ENCODE measurements at regions of chr2 and their contacts with region 1.

Region 1: DNA sequence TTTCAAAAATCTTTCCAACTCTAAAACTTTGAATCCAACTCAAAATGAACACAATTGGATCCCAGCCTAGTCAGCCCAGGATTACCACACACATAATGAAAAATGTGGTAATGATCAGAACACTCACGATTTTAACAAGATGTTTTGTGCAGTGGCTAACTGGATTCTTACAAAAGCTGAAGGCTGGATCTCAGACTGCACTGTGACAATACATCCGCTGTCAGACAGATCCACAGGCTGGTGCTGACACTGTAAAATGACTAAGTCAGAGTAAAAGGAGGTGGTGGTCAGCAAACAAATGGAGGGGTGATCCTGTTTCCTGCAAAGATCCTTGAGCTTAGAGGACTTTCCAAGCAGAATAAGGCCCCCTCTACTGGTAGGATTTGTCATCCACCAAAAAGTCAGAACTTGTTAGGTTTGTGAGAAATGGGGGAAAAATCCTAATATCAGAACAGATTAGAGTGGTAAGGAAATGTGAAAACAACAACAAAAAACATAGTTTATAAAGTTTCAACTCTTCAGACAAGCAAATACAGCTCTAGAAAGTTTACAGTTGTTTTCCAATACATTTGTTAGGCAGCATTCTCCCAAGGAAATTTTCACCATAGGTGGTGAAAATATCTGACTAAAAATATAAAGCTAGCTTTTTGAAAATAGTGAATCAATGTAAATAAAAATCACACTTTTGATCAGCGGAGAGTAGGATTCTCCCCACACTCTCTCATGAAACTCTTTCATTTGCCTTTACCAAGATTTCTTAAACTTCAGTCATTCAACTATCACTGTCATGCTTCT is 211.9 kb downstream of the AGPS start:
- DNase-seq: peak; percentile 71
- H3K4me3 ChIP-seq: no peak overlapping the region
- H3K27ac ChIP-seq: no peak overlapping the region
- H3K4me1 ChIP-seq: no peaks in the 10 kb centered on the region
- H3K27me3 ChIP-seq: no peaks in the 10 kb centered on the region
- CTCF ChIP-seq: peak; percentile 56 to 70
- POLR2A ChIP-seq: no peak

Region 2: DNA sequence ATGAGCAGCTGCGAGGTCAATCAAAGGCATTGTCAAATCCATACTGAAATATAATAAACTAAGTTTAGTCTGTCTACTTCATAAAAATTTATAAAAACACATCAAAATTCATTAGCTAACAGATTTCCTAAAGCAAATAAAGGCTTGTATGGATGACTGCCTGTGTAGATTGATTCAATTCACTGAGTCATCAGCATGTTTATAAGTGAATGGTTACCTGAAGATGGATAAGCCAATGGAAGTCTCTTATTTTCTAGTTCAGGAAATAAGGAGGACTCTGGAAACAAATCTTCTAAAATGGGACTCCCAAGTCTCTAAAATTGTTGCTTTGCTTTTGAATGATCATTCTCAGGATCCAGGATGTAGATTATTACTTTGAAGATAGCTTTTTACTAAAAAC is 448.8 kb before region 1 on chr2:
- CTCF ChIA-PET with region 1: no interaction called
- POLR2A ChIA-PET with region 1: no interaction called
- dilution Hi-C with region 1: no loop called
- intact Hi-C with region 1: no loop called
- DNase-seq: no peak
- H3K4me3 ChIP-seq: no peak overlapping the region
- H3K27ac ChIP-seq: no peak overlapping the region
- H3K4me1 ChIP-seq: peaks cover 16% of the 10 kb centered on the region
- H3K27me3 ChIP-seq: no peaks in the 10 kb centered on the region
- CTCF ChIP-seq: no peak
- POLR2A ChIP-seq: no peak

Region 3: GRCh38 chr2:177419274-177419673 is 185.2 kb before region 1 on chr2:
- CTCF ChIA-PET with region 1: interaction called, 13 read pairs
- POLR2A ChIA-PET with region 1: no interaction called
- dilution Hi-C with region 1: no loop called
- intact Hi-C with region 1: loop called (anchors 2 kb)
- DNase-seq: no peak
- H3K4me3 ChIP-seq: no peak overlapping the region
- H3K27ac ChIP-seq: no peak overlapping the region
- H3K4me1 ChIP-seq: peaks cover 26% of the 10 kb centered on the region
- H3K27me3 ChIP-seq: no peaks in the 10 kb centered on the region
- CTCF ChIP-seq: no peak
- POLR2A ChIP-seq: no peak

Region 4: GRCh38 chr2:177489719-177490301 is 114.7 kb before region 1 on chr2:
- CTCF ChIA-PET with region 1: interaction called, 31 read pairs
- POLR2A ChIA-PET with region 1: no interaction called
- dilution Hi-C with region 1: no loop called
- intact Hi-C with region 1: loop called (anchors 1 kb)
- DNase-seq: peak; percentile 55
- H3K4me3 ChIP-seq: no peak overlapping the region
- H3K27ac ChIP-seq: no peak overlapping the region
- H3K4me1 ChIP-seq: no peaks in the 10 kb centered on the region
- H3K27me3 ChIP-seq: no peaks in the 10 kb centered on the region
- CTCF ChIP-seq: peak; percentile 42 to 45
- POLR2A ChIP-seq: no peak

Region 5: DNA sequence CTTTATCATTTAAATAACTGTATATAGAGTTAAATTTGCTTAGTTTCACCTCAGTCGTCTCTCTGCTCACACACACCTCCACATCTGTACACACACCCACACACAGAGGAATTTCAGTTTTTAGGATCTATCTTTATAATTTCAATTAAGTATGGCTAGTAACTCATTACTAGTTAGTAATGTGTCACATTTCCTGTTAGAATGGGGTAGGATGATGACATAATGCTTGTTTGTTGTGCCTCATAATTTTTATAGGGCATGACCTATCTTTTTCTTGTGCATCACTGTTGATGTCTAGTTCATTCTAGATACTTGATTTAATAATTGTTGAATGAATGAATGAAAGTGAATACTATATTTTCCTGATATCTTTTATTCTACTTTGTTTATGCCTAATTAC is 103.3 kb before region 1 on chr2:
- CTCF ChIA-PET with region 1: interaction called, 15 read pairs
- POLR2A ChIA-PET with region 1: no interaction called
- dilution Hi-C with region 1: no loop called
- intact Hi-C with region 1: no loop called
- DNase-seq: peak; percentile 24
- H3K4me3 ChIP-seq: no peak overlapping the region
- H3K27ac ChIP-seq: no peak overlapping the region
- H3K4me1 ChIP-seq: peaks cover 8% of the 10 kb centered on the region
- H3K27me3 ChIP-seq: no peaks in the 10 kb centered on the region
- CTCF ChIP-seq: no peak
- POLR2A ChIP-seq: no peak

Region 6: GRCh38 chr2:177585234-177585863 is 19.1 kb before region 1 on chr2:
- CTCF ChIA-PET with region 1: interaction called, 14 read pairs
- POLR2A ChIA-PET with region 1: no interaction called
- dilution Hi-C with region 1: no loop called
- intact Hi-C with region 1: no loop called
- DNase-seq: no peak
- H3K4me3 ChIP-seq: no peak overlapping the region
- H3K27ac ChIP-seq: no peak overlapping the region
- H3K4me1 ChIP-seq: no peaks in the 10 kb centered on the region
- H3K27me3 ChIP-seq: no peaks in the 10 kb centered on the region
- CTCF ChIP-seq: no peak
- POLR2A ChIP-seq: no peak

Region 7: DNA sequence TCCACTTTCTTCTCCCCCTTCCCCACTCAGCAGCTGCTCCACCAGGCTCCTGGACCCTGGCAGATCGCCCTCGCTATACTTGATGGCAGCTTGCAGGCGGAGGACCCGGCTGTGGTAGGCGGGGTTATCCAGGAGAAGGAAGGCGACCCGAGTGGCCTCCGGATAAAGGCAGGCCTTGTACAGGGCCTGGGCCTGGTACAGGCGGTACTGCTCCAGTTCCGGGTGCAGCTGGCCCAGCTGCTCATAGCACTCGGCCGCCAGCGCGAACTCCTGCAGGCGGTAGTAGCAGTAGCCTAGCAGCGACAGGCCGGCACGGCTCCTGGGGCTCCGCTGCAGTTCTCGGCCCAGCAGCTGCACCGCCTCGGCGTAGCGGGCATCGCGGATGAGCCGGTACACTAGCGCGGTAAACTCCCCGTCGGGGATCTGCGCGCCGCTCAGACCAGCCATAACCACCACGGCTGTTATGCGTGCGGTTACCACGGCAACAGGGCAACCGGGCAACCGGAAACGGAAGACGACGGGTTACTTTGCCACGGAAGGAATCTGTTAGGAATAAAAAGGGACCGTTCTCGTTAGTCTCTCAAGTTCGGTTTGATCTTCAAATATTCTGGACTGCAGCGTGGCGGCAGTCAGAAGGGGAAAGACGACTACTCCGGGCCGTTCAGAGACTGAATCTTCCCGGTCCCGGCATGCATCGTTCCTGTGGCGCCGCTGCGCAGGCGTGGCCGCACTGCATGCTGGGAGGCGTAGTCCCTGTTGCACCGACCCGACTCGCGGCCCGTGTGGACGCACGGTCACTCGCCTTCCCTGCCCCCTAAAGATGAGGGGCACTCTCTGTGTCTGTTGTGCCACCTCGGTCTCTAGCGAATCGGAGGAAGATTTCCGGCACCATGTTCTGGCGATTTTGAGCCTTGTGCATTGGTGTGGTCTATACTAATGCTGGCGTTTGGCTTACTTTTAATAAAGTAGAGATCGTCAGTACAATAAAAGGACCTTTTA is 14.1 kb after region 1 on chr2:
- CTCF ChIA-PET with region 1: interaction called, 17 read pairs
- POLR2A ChIA-PET with region 1: no interaction called
- dilution Hi-C with region 1: no loop called
- intact Hi-C with region 1: no loop called
- DNase-seq: peak; percentile 94
- H3K4me3 ChIP-seq: peak overlapping the region; percentile 28 to 94 (median 46)
- H3K27ac ChIP-seq: peak overlapping the region; percentile 76
- H3K4me1 ChIP-seq: no peaks in the 10 kb centered on the region
- H3K27me3 ChIP-seq: no peaks in the 10 kb centered on the region
- CTCF ChIP-seq: no peak
- POLR2A ChIP-seq: peak; percentile 76